A673 (cell line): ENCODE measurements at regions of chrX and their contacts with region 1.

Region 1: GRCh38 chrX:109990582-109991276 is 12.2 kb upstream of the TMEM164 start:
- DNase-seq: no peak
- H3K4me3 ChIP-seq: no peak overlapping the region
- H3K27ac ChIP-seq: no peak overlapping the region
- H3K4me1 ChIP-seq: no peaks in the 10 kb centered on the region
- H3K27me3 ChIP-seq: no peaks in the 10 kb centered on the region
- CTCF ChIP-seq: no peak

Region 2: DNA sequence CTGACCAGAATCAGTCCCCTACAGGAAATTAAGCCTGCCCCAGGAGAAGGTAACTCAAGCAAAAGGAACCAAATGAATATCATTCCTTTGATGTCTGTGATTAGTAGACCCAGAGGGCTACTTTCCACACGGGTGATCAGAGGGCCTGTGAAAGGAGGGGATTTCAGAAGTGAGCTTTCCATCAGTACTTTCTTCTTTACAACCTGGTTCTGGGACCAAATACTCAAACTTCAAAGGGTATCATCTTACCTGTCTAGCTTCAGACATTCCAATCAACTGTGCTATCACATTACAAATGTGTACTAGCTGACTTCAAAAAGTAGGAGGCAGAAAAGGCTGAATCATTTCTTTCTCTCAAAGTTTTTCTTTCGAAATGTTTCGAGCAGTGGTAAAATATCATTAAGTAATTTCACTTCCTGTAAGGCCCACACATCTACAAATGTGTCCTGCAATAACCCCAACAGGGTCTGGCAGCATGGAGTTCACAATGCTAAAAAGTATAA is 281.5 kb before region 1 on chrX:
- CTCF ChIA-PET with region 1: no interaction called
- POLR2A ChIA-PET with region 1: no interaction called
- intact Hi-C with region 1: no loop called
- DNase-seq: peak; percentile 45
- H3K4me3 ChIP-seq: peak overlapping the region; percentile 0
- H3K27ac ChIP-seq: peak overlapping the region; percentile 58
- H3K4me1 ChIP-seq: peaks cover 10% of the 10 kb centered on the region
- H3K27me3 ChIP-seq: no peaks in the 10 kb centered on the region
- CTCF ChIP-seq: no peak

Region 3: DNA sequence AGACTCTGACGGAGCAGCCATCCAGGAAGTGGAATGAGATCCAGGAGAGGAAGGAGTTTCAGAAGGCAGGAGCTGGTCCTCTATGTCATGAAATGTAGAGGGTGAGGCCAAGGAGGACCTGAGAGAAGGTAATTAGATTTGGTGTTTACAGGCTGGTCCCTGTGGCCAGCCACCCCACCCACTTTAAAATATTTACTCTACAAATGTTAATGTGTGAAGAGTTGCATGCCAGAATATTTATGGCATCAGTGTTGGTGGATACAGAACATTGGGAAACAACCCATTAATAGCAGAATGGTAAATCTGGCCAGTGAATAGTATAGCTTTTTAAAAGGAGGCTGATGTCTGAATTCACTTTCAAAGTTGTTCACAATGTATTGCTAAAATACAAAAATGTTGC is 29.8 kb after region 1 on chrX:
- CTCF ChIA-PET with region 1: no interaction called
- POLR2A ChIA-PET with region 1: interaction called, 28 read pairs
- intact Hi-C with region 1: no loop called
- DNase-seq: no peak
- H3K4me3 ChIP-seq: no peak overlapping the region
- H3K27ac ChIP-seq: no peak overlapping the region
- H3K4me1 ChIP-seq: no peaks in the 10 kb centered on the region
- H3K27me3 ChIP-seq: no peaks in the 10 kb centered on the region
- CTCF ChIP-seq: no peak

Region 4: GRCh38 chrX:110412971-110413721 is 422.4 kb after region 1 on chrX:
- CTCF ChIA-PET with region 1: no interaction called
- POLR2A ChIA-PET with region 1: no interaction called
- intact Hi-C with region 1: loop called (anchors 10 kb)
- DNase-seq: peak; percentile 83
- H3K4me3 ChIP-seq: peak overlapping the region; percentile 27
- H3K27ac ChIP-seq: no peak overlapping the region
- H3K4me1 ChIP-seq: peaks cover 4% of the 10 kb centered on the region
- H3K27me3 ChIP-seq: no peaks in the 10 kb centered on the region
- CTCF ChIP-seq: peak; percentile 94